Right ventricle myocardium superior (tissue), 1 donor: ENCODE measurements at regions of chr10 and their contacts with region 1.

Region 1: DNA sequence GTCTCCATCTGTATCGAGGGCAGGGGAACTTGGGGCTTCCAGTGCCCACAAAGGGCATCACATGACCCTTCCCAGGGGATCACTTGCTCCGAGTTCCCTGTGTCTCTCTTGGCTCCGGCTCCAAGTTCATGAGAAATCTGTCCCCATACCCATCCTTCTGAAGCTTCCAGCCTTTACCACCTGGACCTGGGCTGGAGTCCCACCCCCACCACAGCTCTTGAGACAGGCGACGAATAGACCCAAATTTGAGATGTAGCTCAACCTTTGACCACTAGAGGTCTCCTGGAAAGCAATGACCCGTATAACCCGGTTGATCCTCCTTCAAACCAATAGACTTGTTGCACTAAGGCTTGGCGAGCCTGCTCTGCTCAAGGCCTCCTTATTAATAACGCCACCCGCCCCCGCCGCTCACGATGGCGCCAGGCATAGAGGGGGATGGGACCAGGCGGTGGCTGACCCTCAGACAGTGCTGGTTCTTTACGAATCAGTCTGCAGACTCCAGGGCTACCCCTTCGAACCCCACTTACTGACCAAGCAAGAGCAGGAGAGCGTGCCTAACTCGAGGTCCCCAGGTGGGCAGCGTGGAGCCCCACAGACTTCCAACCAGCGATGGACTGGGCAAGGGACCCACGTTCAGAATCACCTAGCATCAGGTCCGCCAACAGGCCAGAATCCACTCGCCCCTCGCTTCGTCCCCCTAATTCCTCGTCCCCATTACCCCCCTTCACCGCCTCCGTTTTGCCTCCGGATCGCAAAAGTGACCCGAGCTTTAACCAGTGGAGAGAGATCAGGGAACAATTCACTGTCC is 4.4 kb upstream of the ARID5B start:
- DNase-seq: peak; percentile 73
- ATAC-seq: peak; percentile 82

Region 2: DNA sequence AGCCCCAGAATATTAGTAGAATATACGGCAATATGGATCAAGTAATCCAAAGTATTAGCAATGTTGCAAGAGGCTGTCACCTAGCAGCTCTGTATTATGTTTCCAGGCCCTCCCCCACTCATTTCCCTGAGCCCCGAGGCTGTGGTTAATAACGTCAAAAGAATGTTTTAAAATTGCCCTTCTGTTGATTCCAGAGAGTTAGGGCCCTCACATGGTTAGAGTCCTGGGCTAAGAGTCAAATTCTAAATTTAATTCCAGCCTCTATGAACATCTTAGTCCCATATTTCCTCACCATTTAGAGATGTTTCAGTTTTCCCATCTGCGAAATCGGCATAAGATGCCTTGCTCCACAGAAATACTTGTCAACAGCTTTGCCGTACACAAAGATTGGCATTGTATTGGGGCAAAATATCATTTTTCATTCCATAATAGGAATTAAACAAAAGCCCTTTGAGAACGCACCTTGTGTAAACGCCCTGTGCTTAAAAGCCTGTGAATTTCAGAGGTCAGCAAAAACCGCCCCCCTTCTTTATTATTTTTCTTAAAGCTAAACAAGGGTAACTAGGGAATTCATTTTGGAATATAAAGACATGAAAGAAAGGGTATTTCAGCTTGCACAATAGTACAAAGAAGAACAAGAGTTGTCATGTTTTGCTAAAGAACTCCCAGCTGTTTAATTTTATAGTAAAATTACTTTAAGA is 140.2 kb after region 1 on chr10:
- intact Hi-C with region 1: loop called (anchors 2 kb)
- DNase-seq: no peak
- ATAC-seq: peak; percentile 16